Psoas muscle (tissue), 8 donors: ENCODE measurements at regions of chr1 and their contacts with region 1.

Region 1: DNA sequence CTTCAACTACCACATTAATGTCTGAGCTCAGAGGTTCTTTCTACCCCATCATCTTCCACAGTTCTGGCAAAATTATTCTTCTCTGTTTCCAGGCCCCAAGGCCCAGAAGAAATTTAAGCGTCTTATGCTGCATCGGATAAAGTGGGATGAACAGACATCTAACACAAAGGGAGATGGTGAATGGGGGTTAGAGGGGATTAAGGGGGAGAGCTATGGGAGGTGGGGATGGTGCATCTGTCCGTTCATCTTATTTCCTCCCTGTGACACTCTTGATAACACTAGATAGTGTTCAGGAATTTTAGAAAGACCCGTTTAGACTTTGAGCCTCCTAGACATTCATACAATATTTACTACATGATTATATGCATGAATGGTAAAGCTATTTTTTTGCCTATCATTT is 17.6 kb upstream of the RPRD2 start:
- DNase-seq: no peak
- ATAC-seq: no peak
- H3K4me3 ChIP-seq: no peak overlapping the region
- H3K27ac ChIP-seq: no peak overlapping the region
- H3K4me1 ChIP-seq: no peaks in the 10 kb centered on the region
- H3K27me3 ChIP-seq: no peaks in the 10 kb centered on the region
- CTCF ChIP-seq: no peak

Region 2: DNA sequence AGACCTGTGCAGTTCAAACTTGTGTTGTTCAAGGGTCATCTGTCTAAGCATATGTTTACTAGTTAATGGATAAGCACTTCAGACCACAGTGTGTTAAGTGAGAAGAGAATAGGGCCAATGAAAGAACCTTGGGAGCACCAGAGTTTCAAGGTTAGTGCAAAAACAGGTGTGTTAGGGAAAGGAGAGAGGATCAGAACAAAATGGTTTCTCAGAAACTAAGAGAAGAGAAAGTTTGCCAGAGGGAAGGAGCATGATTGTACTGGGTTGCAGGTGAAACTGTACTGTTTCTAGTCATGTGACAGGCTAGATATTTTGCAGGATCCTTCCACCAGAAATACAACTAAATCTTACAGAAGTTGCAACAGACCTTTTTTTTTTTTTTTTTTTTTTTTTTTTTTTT is 40.9 kb after region 1 on chr1:
- intact Hi-C with region 1: no loop called
- DNase-seq: no peak
- ATAC-seq: peak in 2 of 4 donors; percentile 20 to 40
- H3K4me3 ChIP-seq: no peak overlapping the region
- H3K27ac ChIP-seq: no peak overlapping the region
- H3K4me1 ChIP-seq: peaks cover 39% of the 10 kb centered on the region
- H3K27me3 ChIP-seq: no peaks in the 10 kb centered on the region
- CTCF ChIP-seq: no peak

Region 3: GRCh38 chr1:150813058-150813707 is 466.9 kb after region 1 on chr1:
- intact Hi-C with region 1: loop called in 1 of 2 experiments (anchors 10 kb)
- DNase-seq: peak; percentile 28 to 62
- ATAC-seq: peak in 3 of 4 donors; percentile 64 to 79 (median 72)
- H3K4me3 ChIP-seq: no peak overlapping the region
- H3K27ac ChIP-seq: no peak overlapping the region
- H3K4me1 ChIP-seq: no peaks in the 10 kb centered on the region
- H3K27me3 ChIP-seq: no peaks in the 10 kb centered on the region
- CTCF ChIP-seq: peak; percentile 47

Region 4: DNA sequence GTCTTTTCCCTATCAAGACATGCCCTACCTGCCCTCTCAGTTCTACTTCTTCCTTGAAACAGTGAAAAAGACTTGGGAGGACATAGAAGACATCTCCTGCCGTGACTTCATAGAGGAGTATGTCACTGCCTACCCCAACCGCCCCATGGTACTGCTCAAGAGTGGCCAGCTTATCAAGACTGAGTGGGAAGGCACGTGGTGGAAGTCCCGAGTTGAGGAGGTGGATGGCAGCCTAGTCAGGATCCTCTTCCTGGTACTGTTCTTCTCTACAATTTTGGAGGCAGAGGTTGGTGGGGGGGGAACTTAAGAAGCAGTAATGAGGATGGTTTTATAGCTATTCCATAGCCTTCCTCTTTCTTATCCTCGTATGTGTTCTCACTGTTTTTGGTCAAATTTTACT is 598.5 kb after region 1 on chr1:
- intact Hi-C with region 1: loop called (anchors 10 kb)
- DNase-seq: no peak
- ATAC-seq: no peak
- H3K4me3 ChIP-seq: no peak overlapping the region
- H3K27ac ChIP-seq: no peak overlapping the region
- H3K4me1 ChIP-seq: no peaks in the 10 kb centered on the region
- H3K27me3 ChIP-seq: no peaks in the 10 kb centered on the region
- CTCF ChIP-seq: no peak